GM12878 (cell line): ENCODE measurements at regions of chr1 and their contacts with region 1.

Region 1: GRCh38 chr1:183915625-183916510 is 110.9 kb downstream of the RGL1 start:
- DNase-seq: peak; percentile 68
- ATAC-seq: peak; percentile 60
- H3K4me3 ChIP-seq: no peak overlapping the region
- H3K27ac ChIP-seq: peak overlapping the region; percentile 62
- H3K4me1 ChIP-seq: peaks cover 33% of the 10 kb centered on the region
- H3K27me3 ChIP-seq: no peaks in the 10 kb centered on the region
- CTCF ChIP-seq: peak; percentile 66 to 91 (median 69)
- EP300 ChIP-seq: no peak
- POLR2A ChIP-seq: no peak
- RAD21 ChIP-seq: peak; percentile 98

Region 2: DNA sequence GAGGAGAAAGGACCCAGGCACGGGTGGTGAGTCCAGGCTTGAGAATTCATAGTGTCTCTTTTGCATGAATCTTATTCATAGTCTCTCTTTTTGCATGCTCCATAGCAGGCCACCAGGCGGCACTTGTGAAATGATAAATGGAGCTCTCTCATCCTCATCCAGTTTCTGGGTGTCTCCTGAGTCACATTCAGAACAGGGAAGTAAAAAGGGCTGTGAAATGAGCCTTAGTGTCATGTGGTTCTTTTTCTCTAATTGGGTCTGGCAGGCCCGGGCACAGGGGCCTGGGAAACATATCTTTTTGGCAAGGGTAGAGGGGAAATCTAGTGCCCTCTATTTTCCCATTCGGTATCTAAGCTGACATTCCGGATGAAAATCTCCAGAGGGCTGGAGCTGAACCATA is 306.6 kb before region 1 on chr1:
- CTCF ChIA-PET with region 1: interaction called, 22 read pairs
- POLR2A ChIA-PET with region 1: no interaction called
- RAD21 ChIA-PET with region 1: interaction called, 13 read pairs
- SMC1A ChIA-PET with region 1: interaction called, 6 read pairs
- in situ Hi-C with region 1: no loop called
- intact Hi-C with region 1: loop called (anchors 1 kb)
- DNase-seq: no peak
- ATAC-seq: peak; percentile 62
- H3K4me3 ChIP-seq: no peak overlapping the region
- H3K27ac ChIP-seq: peak overlapping the region; percentile 53
- H3K4me1 ChIP-seq: peaks cover 46% of the 10 kb centered on the region
- H3K27me3 ChIP-seq: no peaks in the 10 kb centered on the region
- CTCF ChIP-seq: peak; percentile 69 to 76 (median 72)
- EP300 ChIP-seq: peak in 1 of 2 experiments; percentile 57; a peak in 1 of 4 replicates
- POLR2A ChIP-seq: no peak
- RAD21 ChIP-seq: peak; percentile 70

Region 3: GRCh38 chr1:183646776-183647175 is 269.1 kb before region 1 on chr1:
- CTCF ChIA-PET with region 1: interaction called, 360 read pairs
- POLR2A ChIA-PET with region 1: no interaction called
- RAD21 ChIA-PET with region 1: interaction called, 299 read pairs
- SMC1A ChIA-PET with region 1: interaction called, 331 read pairs
- in situ Hi-C with region 1: loop called (anchors 5 kb)
- intact Hi-C with region 1: no loop called
- DNase-seq: no peak
- ATAC-seq: peak; percentile 43
- H3K4me3 ChIP-seq: no peak overlapping the region
- H3K27ac ChIP-seq: no peak overlapping the region
- H3K4me1 ChIP-seq: peaks cover 6% of the 10 kb centered on the region
- H3K27me3 ChIP-seq: no peaks in the 10 kb centered on the region
- CTCF ChIP-seq: no peak
- EP300 ChIP-seq: no peak
- POLR2A ChIP-seq: no peak
- RAD21 ChIP-seq: no peak

Region 4: GRCh38 chr1:183685112-183685713 is 230.7 kb before region 1 on chr1:
- CTCF ChIA-PET with region 1: interaction called, 129 read pairs
- POLR2A ChIA-PET with region 1: interaction called, 8 read pairs
- RAD21 ChIA-PET with region 1: interaction called, 63 read pairs
- SMC1A ChIA-PET with region 1: interaction called, 91 read pairs
- in situ Hi-C with region 1: no loop called
- intact Hi-C with region 1: loop called (anchors 10 kb)
- DNase-seq: peak; percentile 11
- ATAC-seq: peak; percentile 75
- H3K4me3 ChIP-seq: no peak overlapping the region
- H3K27ac ChIP-seq: no peak overlapping the region
- H3K4me1 ChIP-seq: 0 out of 2 replicates have a peak, but pooled peaks cover 2% of the 10 kb centered on the region
- H3K27me3 ChIP-seq: no peaks in the 10 kb centered on the region
- CTCF ChIP-seq: peak; percentile 60 to 77 (median 65)
- EP300 ChIP-seq: no peak
- POLR2A ChIP-seq: no peak
- RAD21 ChIP-seq: peak; percentile 81

Region 5: DNA sequence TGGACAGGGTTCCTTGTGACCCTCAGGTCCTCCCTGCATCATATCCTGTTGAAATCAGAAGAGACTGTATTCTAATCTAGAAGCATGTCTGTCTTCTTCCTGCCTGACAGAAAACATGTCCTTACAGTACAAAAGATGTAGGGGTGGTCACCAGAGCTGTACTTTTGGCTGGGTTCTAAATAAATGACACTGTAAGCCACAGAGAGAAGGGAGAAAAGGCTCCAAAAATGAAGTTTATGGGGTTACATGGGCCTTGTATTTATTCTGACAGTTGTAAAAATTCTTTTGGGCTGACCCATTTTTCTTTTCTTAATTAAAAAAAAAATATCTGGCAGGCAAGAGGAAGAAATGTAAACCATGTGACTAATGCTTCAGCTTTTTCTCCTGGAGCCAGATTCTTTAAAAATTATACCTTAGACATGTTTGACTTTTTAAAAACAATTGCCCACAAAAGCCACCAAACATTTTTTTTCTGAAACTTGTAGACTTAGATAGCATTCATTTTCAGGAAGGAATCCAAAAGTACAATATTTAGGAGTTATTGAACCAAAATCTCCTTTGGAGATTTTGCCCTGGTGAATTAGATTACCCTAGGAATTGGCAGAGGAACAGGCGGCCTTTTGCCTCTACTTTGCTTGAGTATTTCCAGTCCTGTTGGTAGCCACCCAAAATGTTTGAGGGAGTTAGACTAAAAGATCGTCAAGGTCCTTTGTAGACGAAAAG is 93.8 kb before region 1 on chr1:
- CTCF ChIA-PET with region 1: interaction called, 11 read pairs
- POLR2A ChIA-PET with region 1: no interaction called
- RAD21 ChIA-PET with region 1: interaction called, 3 read pairs
- SMC1A ChIA-PET with region 1: interaction called, 10 read pairs
- in situ Hi-C with region 1: no loop called
- intact Hi-C with region 1: no loop called
- DNase-seq: no peak
- ATAC-seq: peak; percentile 32; the same call in 2 of the 3 replicates
- H3K4me3 ChIP-seq: no peak overlapping the region
- H3K27ac ChIP-seq: no peak overlapping the region
- H3K4me1 ChIP-seq: peaks cover 9% of the 10 kb centered on the region
- H3K27me3 ChIP-seq: no peaks in the 10 kb centered on the region
- CTCF ChIP-seq: no peak
- EP300 ChIP-seq: no peak
- POLR2A ChIP-seq: no peak
- RAD21 ChIP-seq: no peak

Region 6: DNA sequence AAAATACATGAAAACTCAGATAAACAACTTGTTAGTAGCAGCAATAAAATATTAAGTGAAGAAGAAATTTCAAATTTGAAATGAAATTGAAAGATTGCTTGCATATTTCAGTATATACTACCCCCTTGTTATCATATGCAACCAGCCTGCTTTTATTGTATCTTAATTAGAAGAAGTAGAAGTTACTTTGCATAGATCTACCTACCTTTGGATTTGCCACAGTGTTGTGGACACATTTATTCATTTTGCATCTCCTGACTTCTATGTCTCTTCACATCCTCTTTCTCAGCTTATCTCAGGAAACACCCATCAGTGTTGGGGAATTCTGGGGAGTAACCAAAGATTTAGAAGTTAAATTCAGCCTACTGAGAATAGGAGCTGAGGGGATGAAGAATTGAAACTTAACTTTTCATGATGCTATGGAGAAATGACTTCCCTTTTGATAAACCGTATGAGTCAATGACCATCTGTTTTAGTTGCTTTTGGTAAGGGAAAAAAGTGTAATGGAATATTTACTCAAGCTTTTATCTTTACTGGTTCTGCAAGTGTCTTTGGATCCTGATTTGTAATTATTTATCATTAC is 14.0 kb before region 1 on chr1:
- CTCF ChIA-PET with region 1: interaction called, 64 read pairs
- POLR2A ChIA-PET with region 1: interaction called, 16 read pairs
- RAD21 ChIA-PET with region 1: interaction called, 61 read pairs
- SMC1A ChIA-PET with region 1: interaction called, 134 read pairs
- in situ Hi-C with region 1: no loop called
- intact Hi-C with region 1: loop called (anchors 1 kb)
- DNase-seq: peak; percentile 56
- ATAC-seq: peak; percentile 55
- H3K4me3 ChIP-seq: no peak overlapping the region
- H3K27ac ChIP-seq: peak overlapping the region; percentile 88
- H3K4me1 ChIP-seq: peaks cover 53% of the 10 kb centered on the region
- H3K27me3 ChIP-seq: no peaks in the 10 kb centered on the region
- CTCF ChIP-seq: no peak
- EP300 ChIP-seq: peak; percentile 48 to 68; a peak in 3 of 4 replicates
- POLR2A ChIP-seq: no peak
- RAD21 ChIP-seq: no peak

Region 7: DNA sequence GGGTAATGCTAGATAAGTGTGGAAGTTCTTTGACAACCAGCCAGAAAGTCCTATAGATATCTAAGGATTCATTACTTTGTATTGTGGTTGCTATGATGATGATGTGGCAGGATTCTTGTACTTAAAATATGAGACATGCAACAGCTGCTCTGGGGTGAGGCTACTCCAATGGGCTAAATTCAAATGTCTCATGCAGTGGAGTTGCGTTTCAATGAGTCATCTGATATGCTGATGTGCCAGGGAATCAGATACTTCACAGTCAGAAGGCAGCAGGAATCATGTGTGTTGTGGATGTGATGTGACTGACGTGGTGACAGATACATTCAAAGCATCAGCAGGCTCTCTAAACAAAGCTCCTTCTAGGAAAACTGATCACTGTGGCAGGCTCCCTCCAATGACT is 202.2 kb after region 1 on chr1:
- CTCF ChIA-PET with region 1: no interaction called
- POLR2A ChIA-PET with region 1: no interaction called
- RAD21 ChIA-PET with region 1: no interaction called
- SMC1A ChIA-PET with region 1: no interaction called
- in situ Hi-C with region 1: no loop called
- intact Hi-C with region 1: no loop called
- DNase-seq: no peak
- ATAC-seq: no peak
- H3K4me3 ChIP-seq: no peak overlapping the region
- H3K27ac ChIP-seq: no peak overlapping the region
- H3K4me1 ChIP-seq: no peaks in the 10 kb centered on the region
- H3K27me3 ChIP-seq: no peaks in the 10 kb centered on the region; a peak in 1 of 4 replicates
- CTCF ChIP-seq: no peak
- EP300 ChIP-seq: no peak
- POLR2A ChIP-seq: no peak
- RAD21 ChIP-seq: no peak